ENCODE measurements at regions of chr6 and their contacts with region 1.

Region 1: GRCh38 chr6:36885461-36886401 is at the start of gene C6orf89:
- DNase-seq: peak; percentile 93 to 99
- ATAC-seq: peak; percentile 97 to 100 (median 98)
- H3K4me3 ChIP-seq: peak within 1 kb of the TSS; percentile 77
- H3K4me3 Mint-ChIP-seq: peak within 1 kb of the TSS; percentile 93
- H3K27ac ChIP-seq: peak within 1 kb of the TSS; percentile 73
- H3K27ac Mint-ChIP-seq: peak within 1 kb of the TSS; percentile 89 to 91
- H3K4me1 ChIP-seq: peaks cover 7% of the 10 kb centered on the region
- H3K4me1 Mint-ChIP-seq: peaks cover 28 to 33% of the 10 kb centered on the region in 2 donors
- H3K27me3 ChIP-seq: no peaks in the 10 kb centered on the region
- H3K27me3 Mint-ChIP-seq: no peaks in the 10 kb centered on the region
- CTCF ChIP-seq: peak; percentile 79
- total RNA-seq, gene C6orf89: 34.3 to 47.0 (median 46.3) TPM

Region 2: GRCh38 chr6:36874443-36875249 is 11.1 kb before region 1 on chr6 and contains the start of gene PPIL1:
- intact Hi-C with region 1: loop called (anchors 1 kb)
- DNase-seq: peak; percentile 84 to 93
- ATAC-seq: peak; percentile 88 to 91 (median 91)
- H3K4me3 ChIP-seq: peak within 1 kb of the TSS; percentile 95
- H3K4me3 Mint-ChIP-seq: peak within 1 kb of the TSS; percentile 99
- H3K27ac ChIP-seq: peak within 1 kb of the TSS; percentile 85
- H3K27ac Mint-ChIP-seq: peak within 1 kb of the TSS; percentile 97 to 98
- H3K4me1 ChIP-seq: peaks cover 10% of the 10 kb centered on the region
- H3K4me1 Mint-ChIP-seq: peaks cover 30 to 33% of the 10 kb centered on the region in 2 donors
- H3K27me3 ChIP-seq: no peaks in the 10 kb centered on the region
- H3K27me3 Mint-ChIP-seq: peaks cover 11 to 14% of the 10 kb centered on the region in 2 donors
- CTCF ChIP-seq: no peak
- total RNA-seq, gene PPIL1: 2.6 to 5.2 (median 5.1) TPM

Region 3: GRCh38 chr6:36985808-36986703 is 100.3 kb after region 1 on chr6 and contains the start of gene MTCH1:
- intact Hi-C with region 1: loop called (anchors 2 kb)
- DNase-seq: peak; percentile 93 to 95
- ATAC-seq: peak; percentile 86 to 96 (median 89)
- H3K4me3 ChIP-seq: peak within 1 kb of the TSS; percentile 99
- H3K4me3 Mint-ChIP-seq: peak within 1 kb of the TSS; percentile 98
- H3K27ac ChIP-seq: peak within 1 kb of the TSS; percentile 78
- H3K27ac Mint-ChIP-seq: peak within 1 kb of the TSS in 1 of 2 donors; percentile 92
- H3K4me1 ChIP-seq: peaks cover 27% of the 10 kb centered on the region
- H3K4me1 Mint-ChIP-seq: peaks cover 20 to 24% of the 10 kb centered on the region in 2 donors
- H3K27me3 ChIP-seq: no peaks in the 10 kb centered on the region
- H3K27me3 Mint-ChIP-seq: peaks cover 3 to 12% of the 10 kb centered on the region in 2 donors
- CTCF ChIP-seq: no peak
- total RNA-seq, gene MTCH1: 158 to 180 (median 162) TPM

Measured in natural killer cell (primary cell).